ENCODE measurements at regions of chr19 and their contacts with region 1.

Region 1: DNA sequence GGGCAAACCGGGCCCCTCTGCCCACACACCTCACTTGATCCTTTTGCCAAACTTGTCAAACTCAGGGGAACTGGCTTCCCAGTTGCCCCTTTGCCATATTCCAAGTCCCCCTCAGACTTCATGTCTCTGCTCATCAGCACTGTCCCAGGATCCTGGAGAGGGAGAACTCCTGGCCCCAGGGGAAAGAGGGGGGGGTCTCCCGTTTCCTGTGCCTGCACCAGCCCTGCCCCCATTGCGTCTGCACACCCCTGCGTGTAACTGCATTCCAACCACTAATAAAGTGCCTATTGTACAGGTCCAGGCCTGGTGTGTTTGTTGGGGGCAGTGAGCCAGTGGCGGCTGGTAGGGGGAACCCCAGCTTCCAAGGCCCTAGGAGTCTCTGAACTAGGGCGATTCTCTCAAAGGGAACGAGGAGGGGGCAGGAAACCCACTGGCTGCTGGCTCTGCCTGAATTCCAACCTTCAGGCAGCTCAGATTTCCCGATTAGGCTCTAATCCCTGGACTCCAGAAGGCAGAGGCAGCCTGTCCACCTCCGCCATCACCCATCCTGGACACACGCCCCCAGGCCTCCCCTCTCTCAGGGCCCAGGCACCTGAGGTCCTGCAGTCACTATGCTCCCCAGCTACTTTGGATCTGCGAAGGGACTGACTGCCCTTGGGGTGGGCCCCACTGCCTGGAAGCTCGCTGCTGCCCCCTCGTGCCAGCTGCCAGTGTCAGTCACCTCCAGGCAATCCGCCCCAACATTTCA is 9.7 kb upstream of the ILF3 start:
- DNase-seq: peak; percentile 82

Region 2: DNA sequence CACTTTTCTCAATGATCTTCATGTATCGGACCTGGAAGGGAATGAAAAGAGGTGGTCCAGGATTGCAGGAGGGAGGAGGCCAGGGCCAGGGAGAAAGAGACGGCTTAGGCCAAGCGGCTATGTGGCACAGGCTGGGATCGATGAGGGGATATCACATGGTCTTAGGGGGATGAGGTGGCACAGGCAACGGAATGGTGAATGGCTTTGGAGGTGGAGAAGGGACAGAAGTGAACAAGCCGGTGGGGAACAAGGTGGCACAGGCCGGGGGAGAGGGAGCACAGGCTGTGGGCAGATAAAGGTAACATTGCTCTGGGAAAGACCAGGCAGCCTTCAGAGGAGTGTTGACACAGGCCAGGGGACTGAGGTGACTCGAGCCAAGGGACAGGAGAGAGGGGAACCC is 70.0 kb before region 1 on chr19:
- in situ Hi-C with region 1: loop called (anchors 10 kb)
- DNase-seq: no peak

Measured in KBM-7 (cell line).